Activated CD4-positive, alpha-beta T cell treated with anti-CD3 and anti-CD28 coated beads, Interleukin-2, amount 10 ng/mL, durations not matched to agents 24 days and 14 days (primary cell): ENCODE measurements at regions of chr19 and their contacts with region 1.

Region 1: GRCh38 chr19:45792470-45793177 is at the start of gene DMWD:
- DNase-seq: peak; percentile 100
- H3K4me3 Mint-ChIP-seq: peak within 1 kb of the TSS; percentile 90
- H3K27ac Mint-ChIP-seq: peak within 1 kb of the TSS; percentile 89
- H3K4me1 Mint-ChIP-seq: peaks cover 32% of the 10 kb centered on the region
- H3K27me3 Mint-ChIP-seq: peaks cover 61% of the 10 kb centered on the region
- total RNA-seq, gene DMWD: 49.6 and 50.7 TPM in 2 replicates

Region 2: GRCh38 chr19:45770192-45771101 is 22.2 kb before region 1 on chr19:
- intact Hi-C with region 1: loop called (anchors 1 kb)
- DNase-seq: peak; percentile 97
- H3K4me3 Mint-ChIP-seq: peak overlapping the region; percentile 93
- H3K27ac Mint-ChIP-seq: peak overlapping the region; percentile 56
- H3K4me1 Mint-ChIP-seq: peaks cover 12% of the 10 kb centered on the region
- H3K27me3 Mint-ChIP-seq: peaks cover 20% of the 10 kb centered on the region

Region 3: DNA sequence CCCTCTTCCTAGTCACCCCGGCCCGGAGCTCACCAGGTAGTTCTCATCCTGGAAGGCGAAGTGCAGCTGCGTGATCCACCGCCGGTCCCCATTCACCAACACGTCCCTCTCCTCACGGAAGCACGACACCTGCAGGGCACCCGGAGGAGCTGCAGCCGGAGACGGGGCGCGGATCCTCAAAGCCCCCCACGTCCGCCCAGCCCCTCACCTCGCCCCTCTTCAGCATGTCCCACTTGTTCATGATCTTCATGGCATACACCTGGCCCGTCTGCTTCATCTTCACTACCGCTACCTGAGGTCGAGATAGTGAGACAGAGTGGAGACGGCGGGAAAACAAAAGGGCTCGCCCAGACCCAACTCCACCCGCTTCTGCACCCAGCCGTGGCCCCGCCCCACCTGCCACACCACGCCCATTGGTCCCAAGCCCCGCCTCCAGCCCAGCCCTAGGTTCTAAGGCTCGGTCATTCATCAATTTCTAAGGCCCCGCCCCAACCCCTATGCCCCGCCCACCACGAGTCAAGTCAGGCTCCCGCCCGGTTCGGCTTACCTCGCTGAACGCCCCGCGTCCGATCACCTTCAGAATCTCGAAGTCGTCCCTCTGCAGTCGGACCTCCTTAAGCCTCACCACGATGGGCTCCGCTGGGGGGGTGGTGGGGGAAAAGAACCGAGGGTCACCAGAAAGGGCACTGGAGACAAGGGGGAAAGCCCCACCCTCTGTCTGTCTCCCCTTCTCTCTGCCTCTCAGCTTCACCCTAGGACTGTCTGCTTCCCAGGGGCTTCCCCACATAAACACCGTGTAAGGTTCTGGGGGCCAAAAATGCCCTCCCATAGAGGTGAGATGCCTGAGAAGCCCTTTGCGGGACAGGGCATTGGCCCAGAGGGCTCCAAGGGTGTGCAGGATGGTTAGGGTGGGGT is 13.1 kb before region 1 on chr19:
- intact Hi-C with region 1: loop called (anchors 1 kb)
- DNase-seq: peak; percentile 96
- H3K4me3 Mint-ChIP-seq: peak overlapping the region; percentile 72
- H3K27ac Mint-ChIP-seq: peak overlapping the region; percentile 34
- H3K4me1 Mint-ChIP-seq: peaks cover 15% of the 10 kb centered on the region
- H3K27me3 Mint-ChIP-seq: peaks cover 26% of the 10 kb centered on the region

Region 4: GRCh38 chr19:45994989-45995714 is 202.5 kb after region 1 on chr19 and contains the start of gene CCDC61:
- intact Hi-C with region 1: loop called (anchors 2 kb)
- DNase-seq: peak; percentile 99
- H3K4me3 Mint-ChIP-seq: no peak within 1 kb of the TSS
- H3K27ac Mint-ChIP-seq: no peak within 1 kb of the TSS
- H3K4me1 Mint-ChIP-seq: peaks cover 20% of the 10 kb centered on the region
- H3K27me3 Mint-ChIP-seq: peaks cover 6% of the 10 kb centered on the region
- total RNA-seq, gene CCDC61: 23.1 and 30.1 TPM in 2 replicates